GM10248 (cell line): ENCODE measurements at regions of chr1 and their contacts with region 1.

Region 1: DNA sequence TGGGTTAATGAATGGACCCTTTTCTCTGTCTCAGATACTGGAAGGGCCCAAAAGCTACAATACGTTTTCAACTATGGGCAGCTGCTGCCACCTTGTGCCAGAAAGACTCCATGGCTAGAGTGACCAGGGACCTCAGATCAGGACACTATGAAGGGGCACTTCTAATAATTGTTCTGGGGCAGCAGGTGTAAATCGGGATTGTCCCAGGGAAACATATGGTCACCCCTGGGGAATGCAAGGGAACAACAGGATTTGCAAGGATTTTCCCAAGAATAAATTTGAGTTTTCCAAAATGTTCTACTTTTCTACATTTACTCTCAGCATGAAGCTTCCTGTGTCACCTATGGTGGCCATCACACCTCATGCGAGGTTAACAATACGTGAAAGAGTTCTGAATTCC is 12.0 kb upstream of the FCAMR start:
- DNase-seq: peak; percentile 77
- CTCF ChIP-seq: peak; percentile 85

Region 2: DNA sequence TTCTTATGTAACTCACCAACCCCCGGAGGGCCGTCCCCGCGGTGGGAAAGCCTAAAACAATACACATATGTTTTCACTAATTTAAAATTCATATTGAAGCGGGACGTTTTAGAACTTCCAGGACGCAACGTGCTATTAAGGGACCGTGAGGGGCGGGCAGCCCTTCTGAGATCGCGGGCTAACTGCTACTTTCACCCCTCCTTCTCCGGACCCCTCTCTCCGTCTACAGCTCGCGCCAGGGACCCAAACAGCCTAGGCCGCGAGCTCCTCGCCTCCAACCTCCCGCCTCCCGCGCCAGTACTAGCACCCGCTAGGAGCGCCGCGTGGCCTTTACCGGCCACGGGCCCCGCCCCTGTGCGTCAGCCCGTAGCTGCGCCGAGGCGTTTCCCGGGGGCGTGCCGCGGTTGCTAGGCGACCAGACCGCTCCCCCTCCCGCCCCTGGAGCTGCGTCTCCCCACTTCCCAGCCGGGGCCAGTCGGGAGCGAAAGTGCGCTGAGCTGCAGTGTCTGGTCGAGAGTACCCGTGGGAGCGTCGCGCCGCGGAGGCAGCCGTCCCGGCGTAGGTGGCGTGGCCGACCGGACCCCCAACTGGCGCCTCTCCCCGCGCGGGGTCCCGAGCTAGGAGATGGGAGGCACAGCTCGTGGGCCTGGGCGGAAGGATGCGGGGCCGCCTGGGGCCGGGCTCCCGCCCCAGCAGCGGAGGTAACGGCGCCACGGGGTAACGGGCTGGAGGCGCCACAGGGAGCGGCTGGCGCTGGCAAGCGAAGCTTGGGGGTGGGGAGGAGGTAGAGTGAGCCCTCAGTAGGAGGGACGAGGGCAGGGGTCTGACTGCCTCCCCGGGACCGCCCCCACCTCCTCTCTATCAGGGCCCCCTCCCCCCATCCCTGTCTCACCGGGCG is 346.9 kb before region 1 on chr1 and contains the start of gene DYRK3:
- CTCF ChIA-PET with region 1: interaction called, 13 read pairs
- POLR2A ChIA-PET with region 1: interaction called, 4 read pairs
- DNase-seq: peak; percentile 97
- CTCF ChIP-seq: no peak

Region 3: DNA sequence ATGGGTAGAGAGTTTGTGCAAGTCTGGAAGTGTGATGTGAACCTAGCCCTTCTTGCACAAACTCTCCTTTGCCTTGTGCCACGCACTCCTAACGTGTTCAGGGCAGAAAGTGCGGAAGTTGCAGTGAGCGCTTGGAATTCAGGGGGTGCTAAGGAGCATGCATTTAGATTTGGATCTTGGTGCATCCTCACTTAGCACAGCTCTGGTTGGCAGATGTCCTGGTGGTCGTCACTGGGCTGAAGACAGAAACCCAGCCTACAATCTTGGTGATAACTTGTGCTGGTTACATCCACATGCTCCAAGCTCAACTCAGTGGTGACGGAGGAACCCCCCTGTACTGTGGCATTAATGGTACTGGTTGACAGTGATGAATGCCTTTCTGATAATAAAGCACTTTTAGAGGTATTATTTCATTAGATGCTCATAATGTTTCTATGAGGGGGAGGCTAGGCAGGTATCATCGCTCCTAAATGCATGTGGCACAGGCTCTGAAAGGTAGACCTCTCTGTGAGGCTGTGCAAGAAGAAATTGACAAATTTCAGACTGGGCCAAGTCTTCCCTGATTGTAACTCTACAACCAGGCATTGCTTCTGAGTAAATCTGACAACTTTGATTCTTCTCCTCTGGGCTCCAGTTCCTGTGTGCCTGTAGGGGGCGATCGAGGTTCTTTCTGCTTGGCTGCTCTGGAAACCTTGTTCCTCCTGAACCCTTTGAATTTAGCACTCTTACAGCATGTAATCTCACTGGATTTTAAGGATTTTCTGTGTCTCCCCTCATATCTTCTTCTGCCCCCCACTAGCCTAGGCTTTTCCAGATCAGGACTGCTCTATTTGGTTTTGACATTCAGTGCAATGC is 256.9 kb before region 1 on chr1:
- CTCF ChIA-PET with region 1: interaction called, 64 read pairs
- POLR2A ChIA-PET with region 1: no interaction called
- DNase-seq: peak; percentile 71
- CTCF ChIP-seq: peak; percentile 75

Region 4: GRCh38 chr1:206925106-206925736 is 57.0 kb before region 1 on chr1:
- CTCF ChIA-PET with region 1: interaction called, 357 read pairs
- POLR2A ChIA-PET with region 1: no interaction called
- DNase-seq: peak; percentile 81
- CTCF ChIP-seq: peak; percentile 69

Region 5: DNA sequence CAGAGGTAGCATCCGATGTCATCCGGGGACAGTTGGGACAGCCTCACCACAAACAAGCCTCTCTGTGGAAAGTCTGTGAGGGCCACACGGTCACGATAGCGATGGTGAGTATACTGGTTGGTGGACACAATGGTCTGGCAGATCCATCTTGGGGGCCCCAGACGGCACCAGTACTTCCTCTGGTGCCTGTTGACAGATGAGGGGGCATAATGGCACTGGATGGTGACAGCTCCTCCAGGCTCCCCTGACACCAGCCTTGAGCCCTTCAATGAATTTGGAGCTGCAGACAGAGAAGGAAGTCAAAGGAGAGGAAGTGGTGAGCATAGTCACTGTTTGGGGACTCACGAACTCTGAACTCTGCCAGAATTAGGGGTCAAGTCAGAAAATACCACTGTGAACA is 19.9 kb before region 1 on chr1:
- CTCF ChIA-PET with region 1: interaction called, 160 read pairs
- POLR2A ChIA-PET with region 1: no interaction called
- DNase-seq: no peak
- CTCF ChIP-seq: no peak

Region 6: DNA sequence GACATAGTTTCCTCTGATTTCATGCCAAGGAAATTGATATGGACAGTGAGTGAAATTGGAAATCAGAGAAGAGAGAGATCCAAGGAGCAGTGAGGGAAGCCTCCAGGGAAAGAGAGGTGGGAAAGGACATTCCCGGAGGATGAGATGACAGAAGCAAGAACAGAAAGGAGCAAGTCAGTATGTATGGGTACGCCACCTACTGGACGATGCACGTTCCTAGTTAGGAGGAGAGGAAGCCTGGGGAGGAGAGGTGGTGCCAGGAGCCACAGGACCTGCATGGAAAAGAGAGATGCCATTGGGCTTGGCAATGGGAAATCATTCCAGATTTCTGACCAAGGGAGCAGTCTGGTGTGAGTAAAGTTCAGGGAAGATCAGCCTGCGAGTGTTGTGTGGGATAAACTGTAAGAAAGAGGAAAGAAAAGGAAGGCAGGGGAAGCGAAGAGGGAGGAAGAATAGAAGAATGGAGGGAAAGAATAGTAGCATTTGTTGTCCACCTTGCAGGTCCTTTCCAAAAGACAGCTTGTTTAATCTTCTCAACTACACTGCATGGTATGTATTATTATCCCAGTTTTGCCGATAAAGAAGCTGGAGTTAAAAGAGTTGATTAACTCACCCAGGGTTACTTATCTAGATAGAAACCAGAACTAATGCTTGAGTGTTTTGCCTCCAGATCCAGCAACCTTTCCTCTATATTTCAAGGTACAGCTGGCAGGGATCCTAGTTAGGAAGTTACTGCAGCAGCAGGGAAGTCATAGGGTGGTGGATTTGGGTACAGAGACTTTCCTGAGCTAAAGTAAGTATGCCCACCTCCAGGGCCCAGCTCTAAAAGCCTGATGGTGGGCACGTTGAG is 23.0 kb after region 1 on chr1:
- CTCF ChIA-PET with region 1: interaction called, 31 read pairs
- POLR2A ChIA-PET with region 1: no interaction called
- DNase-seq: peak; percentile 60
- CTCF ChIP-seq: peak; percentile 85